ENCODE measurements at regions of chr1 and their contacts with region 1.

Region 1: GRCh38 chr1:205061665-205062069 is 18.7 kb downstream of the CNTN2 start:
- DNase-seq: peak; percentile 71 to 82
- H3K4me3 ChIP-seq: no peak overlapping the region
- H3K4me3 Mint-ChIP-seq: no peak overlapping the region
- H3K27ac Mint-ChIP-seq: no peak overlapping the region
- H3K4me1 ChIP-seq: peaks cover 6% of the 10 kb centered on the region; the same call in 1 of the 2 replicates
- H3K4me1 Mint-ChIP-seq: no peaks in the 10 kb centered on the region
- H3K27me3 ChIP-seq: no peaks in the 10 kb centered on the region
- H3K27me3 Mint-ChIP-seq: peaks cover 2% of the 10 kb centered on the region
- CTCF ChIP-seq: peak; percentile 87 to 91

Region 2: GRCh38 chr1:204989266-204990058 is 72.2 kb before region 1 on chr1:
- CTCF ChIA-PET with region 1: interaction called, 191 read pairs
- POLR2A ChIA-PET with region 1: interaction called, 3 read pairs
- intact Hi-C with region 1: loop called (anchors 1 kb)
- DNase-seq: peak; percentile 61 to 76
- H3K4me3 ChIP-seq: no peak overlapping the region
- H3K4me3 Mint-ChIP-seq: no peak overlapping the region
- H3K27ac Mint-ChIP-seq: no peak overlapping the region
- H3K4me1 ChIP-seq: no peaks in the 10 kb centered on the region
- H3K4me1 Mint-ChIP-seq: no peaks in the 10 kb centered on the region
- H3K27me3 ChIP-seq: no peaks in the 10 kb centered on the region; the same call in 1 of the 2 replicates
- H3K27me3 Mint-ChIP-seq: peaks cover 22% of the 10 kb centered on the region
- CTCF ChIP-seq: peak; percentile 94 to 97

Region 3: GRCh38 chr1:205030896-205031295 is 30.8 kb before region 1 on chr1:
- CTCF ChIA-PET with region 1: interaction called, 17 read pairs
- POLR2A ChIA-PET with region 1: no interaction called
- intact Hi-C with region 1: no loop called
- DNase-seq: no peak
- H3K4me3 ChIP-seq: no peak overlapping the region
- H3K4me3 Mint-ChIP-seq: no peak overlapping the region
- H3K27ac Mint-ChIP-seq: no peak overlapping the region
- H3K4me1 ChIP-seq: no peaks in the 10 kb centered on the region
- H3K4me1 Mint-ChIP-seq: no peaks in the 10 kb centered on the region
- H3K27me3 ChIP-seq: no peaks in the 10 kb centered on the region
- H3K27me3 Mint-ChIP-seq: peaks cover 13% of the 10 kb centered on the region
- CTCF ChIP-seq: no peak

Region 4: GRCh38 chr1:205141236-205142101 is 79.8 kb after region 1 on chr1:
- CTCF ChIA-PET with region 1: interaction called, 14 read pairs
- POLR2A ChIA-PET with region 1: no interaction called
- intact Hi-C with region 1: no loop called
- DNase-seq: peak; percentile 56 to 72
- H3K4me3 ChIP-seq: no peak overlapping the region
- H3K4me3 Mint-ChIP-seq: no peak overlapping the region
- H3K27ac Mint-ChIP-seq: no peak overlapping the region
- H3K4me1 ChIP-seq: peaks cover 15% of the 10 kb centered on the region
- H3K4me1 Mint-ChIP-seq: peaks cover 11% of the 10 kb centered on the region
- H3K27me3 ChIP-seq: no peaks in the 10 kb centered on the region
- H3K27me3 Mint-ChIP-seq: no peaks in the 10 kb centered on the region
- CTCF ChIP-seq: peak; percentile 66 to 67

Region 5: GRCh38 chr1:205255941-205256780 is 194.5 kb after region 1 on chr1:
- CTCF ChIA-PET with region 1: interaction called, 17 read pairs
- POLR2A ChIA-PET with region 1: no interaction called
- intact Hi-C with region 1: loop called (anchors 1 kb)
- DNase-seq: peak; percentile 83 to 90
- H3K4me3 ChIP-seq: no peak overlapping the region
- H3K4me3 Mint-ChIP-seq: no peak overlapping the region
- H3K27ac Mint-ChIP-seq: no peak overlapping the region
- H3K4me1 ChIP-seq: no peaks in the 10 kb centered on the region
- H3K4me1 Mint-ChIP-seq: no peaks in the 10 kb centered on the region
- H3K27me3 ChIP-seq: no peaks in the 10 kb centered on the region
- H3K27me3 Mint-ChIP-seq: no peaks in the 10 kb centered on the region
- CTCF ChIP-seq: peak; percentile 87 to 95

Region 6: DNA sequence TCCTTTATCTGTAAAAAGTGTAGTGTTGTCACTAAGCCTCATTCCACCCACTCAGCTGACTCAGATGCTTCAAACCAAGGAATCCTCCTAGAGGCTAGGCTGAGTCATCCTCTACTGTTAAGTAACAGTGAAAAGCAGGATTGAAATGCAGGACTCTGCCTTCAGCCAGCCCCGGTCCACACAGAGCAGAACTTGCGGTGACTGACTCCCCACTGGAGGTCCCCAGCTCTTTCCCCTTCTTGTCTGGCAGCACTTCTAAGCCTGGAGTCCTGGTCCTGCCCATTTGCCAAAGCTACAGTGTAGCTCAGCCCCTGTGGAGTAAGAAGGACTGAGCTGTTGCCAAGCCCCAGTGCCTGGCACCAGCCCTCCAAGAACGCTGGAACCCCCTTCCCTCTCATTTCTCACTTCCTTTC is 939.8 kb after region 1 on chr1:
- CTCF ChIA-PET with region 1: no interaction called
- POLR2A ChIA-PET with region 1: no interaction called
- intact Hi-C with region 1: no loop called
- DNase-seq: no peak
- H3K4me3 ChIP-seq: no peak overlapping the region
- H3K4me3 Mint-ChIP-seq: no peak overlapping the region
- H3K27ac Mint-ChIP-seq: no peak overlapping the region
- H3K4me1 ChIP-seq: no peaks in the 10 kb centered on the region
- H3K4me1 Mint-ChIP-seq: peaks cover 4% of the 10 kb centered on the region
- H3K27me3 ChIP-seq: no peaks in the 10 kb centered on the region
- H3K27me3 Mint-ChIP-seq: peaks cover 8% of the 10 kb centered on the region
- CTCF ChIP-seq: no peak

Measured in Caco-2 (cell line).